PC-9 (cell line): ENCODE measurements at regions of chr13 and their contacts with region 1.

Region 1: GRCh38 chr13:87769445-87769844 is 98.3 kb downstream of the SLITRK5 start:
- DNase-seq: no peak
- H3K4me3 ChIP-seq: no peak overlapping the region
- H3K27ac ChIP-seq: no peak overlapping the region
- H3K4me1 ChIP-seq: no peaks in the 10 kb centered on the region
- H3K27me3 ChIP-seq: no peaks in the 10 kb centered on the region
- CTCF ChIP-seq: no peak

Region 2: GRCh38 chr13:86368924-86369323 is 1400.5 kb before region 1 on chr13:
- CTCF ChIA-PET with region 1: no interaction called
- POLR2A ChIA-PET with region 1: interaction called, 17 read pairs
- intact Hi-C with region 1: no loop called
- DNase-seq: no peak
- H3K4me3 ChIP-seq: no peak overlapping the region
- H3K27ac ChIP-seq: no peak overlapping the region
- H3K4me1 ChIP-seq: no peaks in the 10 kb centered on the region
- H3K27me3 ChIP-seq: no peaks in the 10 kb centered on the region
- CTCF ChIP-seq: no peak

Region 3: GRCh38 chr13:87356314-87356713 is 413.1 kb before region 1 on chr13:
- CTCF ChIA-PET with region 1: no interaction called
- POLR2A ChIA-PET with region 1: no interaction called
- intact Hi-C with region 1: no loop called
- DNase-seq: peak in 1 of 2 experiments; percentile 57
- H3K4me3 ChIP-seq: no peak overlapping the region
- H3K27ac ChIP-seq: no peak overlapping the region
- H3K4me1 ChIP-seq: no peaks in the 10 kb centered on the region
- H3K27me3 ChIP-seq: no peaks in the 10 kb centered on the region
- CTCF ChIP-seq: no peak